Panc1 (cell line): ENCODE measurements at regions of chr4 and their contacts with region 1.

Region 1: DNA sequence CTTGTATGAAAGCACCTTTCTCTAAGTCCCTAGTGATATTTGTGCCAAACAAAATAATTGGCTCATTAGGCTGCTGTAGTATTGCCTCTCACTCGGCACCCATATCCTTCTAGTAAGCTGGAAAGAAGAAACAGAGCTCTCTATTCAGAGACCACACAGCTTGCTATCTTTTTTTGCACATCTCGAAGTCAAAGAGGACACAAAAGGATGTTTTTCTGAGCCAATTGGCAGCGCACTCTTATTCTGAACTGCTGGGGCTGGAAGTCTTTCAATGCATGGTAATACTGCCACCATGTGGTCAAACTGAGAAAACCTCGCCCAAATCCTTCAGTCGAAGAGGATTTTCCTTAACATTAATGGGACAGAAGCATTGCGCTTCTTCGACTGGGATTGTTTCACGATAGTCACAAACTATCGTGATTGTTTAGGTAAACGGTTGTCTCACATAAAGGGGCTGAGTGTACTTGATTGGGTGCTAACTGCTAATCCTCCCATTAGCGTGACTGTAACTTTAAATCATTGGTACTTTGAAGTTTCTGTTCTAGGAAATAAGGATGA is 572.0 kb upstream of the LCORL start:
- DNase-seq: peak; percentile 56
- ATAC-seq: peak; percentile 73
- H3K4me3 ChIP-seq: peak overlapping the region; percentile 9 to 45; a peak in 2 of 4 replicates
- H3K27ac ChIP-seq: no peak overlapping the region
- H3K4me1 ChIP-seq: no peaks in the 10 kb centered on the region
- H3K27me3 ChIP-seq: no peaks in the 10 kb centered on the region
- CTCF ChIP-seq: peak; percentile 78

Region 2: GRCh38 chr4:17544205-17544604 is 1049.3 kb before region 1 on chr4:
- CTCF ChIA-PET with region 1: interaction called, 3 read pairs
- POLR2A ChIA-PET with region 1: no interaction called
- in situ Hi-C with region 1: no loop called
- intact Hi-C with region 1: loop called (anchors 10 kb)
- DNase-seq: peak; percentile 5
- ATAC-seq: no peak
- H3K4me3 ChIP-seq: no peak overlapping the region
- H3K27ac ChIP-seq: no peak overlapping the region
- H3K4me1 ChIP-seq: no peaks in the 10 kb centered on the region
- H3K27me3 ChIP-seq: no peaks in the 10 kb centered on the region
- CTCF ChIP-seq: no peak

Region 3: GRCh38 chr4:17709763-17710068 is 883.8 kb before region 1 on chr4:
- CTCF ChIA-PET with region 1: interaction called, 14 read pairs
- POLR2A ChIA-PET with region 1: no interaction called
- in situ Hi-C with region 1: no loop called
- intact Hi-C with region 1: no loop called
- DNase-seq: no peak
- ATAC-seq: no peak
- H3K4me3 ChIP-seq: no peak overlapping the region
- H3K27ac ChIP-seq: no peak overlapping the region
- H3K4me1 ChIP-seq: no peaks in the 10 kb centered on the region
- H3K27me3 ChIP-seq: no peaks in the 10 kb centered on the region
- CTCF ChIP-seq: no peak

Region 4: DNA sequence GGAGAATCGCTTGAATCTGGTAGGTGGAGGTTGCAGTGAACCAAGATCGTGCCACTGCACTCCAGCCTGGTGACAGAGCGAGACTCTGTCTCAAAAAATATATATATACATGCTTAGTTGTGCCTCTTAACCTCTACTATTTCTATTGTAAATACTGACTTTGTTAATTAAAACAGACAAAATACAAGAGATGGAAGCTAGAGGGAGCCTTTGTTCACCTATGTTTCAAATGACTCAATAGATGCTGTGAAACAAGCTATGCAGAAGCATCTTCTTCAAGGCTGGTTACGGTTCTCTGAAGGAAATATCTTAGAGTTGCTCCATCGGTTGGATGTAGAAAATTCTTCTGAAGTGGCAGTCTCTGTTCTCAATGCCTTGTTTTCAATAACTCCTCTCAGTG is 776.5 kb before region 1 on chr4:
- CTCF ChIA-PET with region 1: interaction called, 3 read pairs
- POLR2A ChIA-PET with region 1: no interaction called
- in situ Hi-C with region 1: no loop called
- intact Hi-C with region 1: loop called (anchors 5 kb)
- DNase-seq: peak; percentile 25
- ATAC-seq: peak; percentile 71; the same call in 1 of the 2 replicates
- H3K4me3 ChIP-seq: no peak overlapping the region
- H3K27ac ChIP-seq: no peak overlapping the region
- H3K4me1 ChIP-seq: no peaks in the 10 kb centered on the region; the same call in 1 of the 2 replicates
- H3K27me3 ChIP-seq: no peaks in the 10 kb centered on the region
- CTCF ChIP-seq: peak; percentile 59

Region 5: DNA sequence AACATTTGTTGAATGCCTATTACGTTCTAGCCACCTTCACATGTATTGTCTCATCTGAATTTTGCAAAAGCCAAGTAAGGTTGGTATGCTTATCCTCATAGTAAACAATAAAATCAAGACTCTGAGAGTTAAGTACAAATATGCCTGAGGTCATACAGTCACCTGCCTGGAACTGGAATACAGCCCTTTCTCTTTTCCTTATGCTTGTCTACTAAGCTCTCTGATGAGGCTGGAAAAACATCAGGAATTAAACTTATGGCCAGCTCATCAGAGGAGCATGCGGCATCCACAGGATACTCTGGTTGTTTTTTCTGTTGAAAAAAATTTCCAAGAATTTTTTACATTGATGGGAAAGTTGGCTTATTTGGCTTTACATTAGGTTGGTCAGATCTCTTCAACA is 747.3 kb before region 1 on chr4:
- CTCF ChIA-PET with region 1: no interaction called
- POLR2A ChIA-PET with region 1: no interaction called
- in situ Hi-C with region 1: no loop called
- intact Hi-C with region 1: loop called (anchors 10 kb)
- DNase-seq: no peak
- ATAC-seq: peak; percentile 38; the same call in 1 of the 2 replicates
- H3K4me3 ChIP-seq: no peak overlapping the region
- H3K27ac ChIP-seq: no peak overlapping the region
- H3K4me1 ChIP-seq: no peaks in the 10 kb centered on the region
- H3K27me3 ChIP-seq: no peaks in the 10 kb centered on the region
- CTCF ChIP-seq: no peak

Region 6: DNA sequence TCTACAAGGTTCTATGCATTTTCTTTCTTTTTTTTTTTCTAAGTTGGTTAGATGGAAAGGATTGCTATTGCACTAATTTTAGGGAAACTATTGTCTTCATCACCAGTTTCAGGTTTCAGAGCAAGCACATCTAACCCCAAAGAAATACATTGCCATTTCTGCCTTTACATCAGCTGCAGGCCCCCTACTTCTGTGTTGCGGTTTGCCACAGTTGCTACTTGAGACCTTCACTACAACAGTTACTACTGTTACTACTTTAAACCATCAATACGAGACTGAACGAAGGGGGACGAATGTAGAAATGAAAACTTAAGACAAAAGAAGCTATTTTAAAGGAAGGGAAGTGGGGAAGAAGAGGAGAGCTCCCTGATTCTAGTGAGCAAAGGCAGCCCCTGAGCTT is 315.3 kb before region 1 on chr4:
- CTCF ChIA-PET with region 1: no interaction called
- POLR2A ChIA-PET with region 1: no interaction called
- in situ Hi-C with region 1: no loop called
- intact Hi-C with region 1: no loop called
- DNase-seq: no peak
- ATAC-seq: no peak
- H3K4me3 ChIP-seq: no peak overlapping the region
- H3K27ac ChIP-seq: no peak overlapping the region
- H3K4me1 ChIP-seq: no peaks in the 10 kb centered on the region
- H3K27me3 ChIP-seq: no peaks in the 10 kb centered on the region
- CTCF ChIP-seq: no peak

Region 7: GRCh38 chr4:18630218-18631110 is 36.9 kb after region 1 on chr4:
- CTCF ChIA-PET with region 1: no interaction called
- POLR2A ChIA-PET with region 1: no interaction called
- in situ Hi-C with region 1: no loop called
- intact Hi-C with region 1: no loop called
- DNase-seq: no peak
- ATAC-seq: no peak
- H3K4me3 ChIP-seq: no peak overlapping the region
- H3K27ac ChIP-seq: no peak overlapping the region
- H3K4me1 ChIP-seq: no peaks in the 10 kb centered on the region
- H3K27me3 ChIP-seq: no peaks in the 10 kb centered on the region
- CTCF ChIP-seq: no peak

Region 8: DNA sequence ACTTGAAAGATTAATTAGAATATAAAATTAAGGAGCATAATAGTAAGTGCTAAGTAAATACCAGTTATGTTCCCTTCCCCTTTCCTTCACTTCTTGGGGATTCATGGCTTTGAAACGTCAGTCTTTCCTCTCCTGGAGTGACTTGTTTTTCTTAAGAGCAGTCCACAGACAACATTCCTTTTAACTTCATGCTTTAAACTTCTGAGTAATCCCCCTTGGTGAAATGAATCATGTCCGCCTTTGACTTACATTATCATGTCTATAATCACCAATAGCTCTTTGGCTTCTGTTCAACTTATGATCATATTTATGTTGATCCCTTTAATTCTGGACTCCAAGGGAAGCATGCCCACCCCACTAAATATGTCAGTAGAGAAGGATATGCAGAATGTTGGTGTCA is 646.0 kb after region 1 on chr4:
- CTCF ChIA-PET with region 1: no interaction called
- POLR2A ChIA-PET with region 1: no interaction called
- in situ Hi-C with region 1: no loop called
- intact Hi-C with region 1: no loop called
- DNase-seq: no peak
- ATAC-seq: no peak
- H3K4me3 ChIP-seq: no peak overlapping the region
- H3K27ac ChIP-seq: no peak overlapping the region
- H3K4me1 ChIP-seq: no peaks in the 10 kb centered on the region
- H3K27me3 ChIP-seq: no peaks in the 10 kb centered on the region
- CTCF ChIP-seq: no peak